HCT116 (cell line): ENCODE measurements at regions of chr16 and their contacts with region 1.

Region 1: DNA sequence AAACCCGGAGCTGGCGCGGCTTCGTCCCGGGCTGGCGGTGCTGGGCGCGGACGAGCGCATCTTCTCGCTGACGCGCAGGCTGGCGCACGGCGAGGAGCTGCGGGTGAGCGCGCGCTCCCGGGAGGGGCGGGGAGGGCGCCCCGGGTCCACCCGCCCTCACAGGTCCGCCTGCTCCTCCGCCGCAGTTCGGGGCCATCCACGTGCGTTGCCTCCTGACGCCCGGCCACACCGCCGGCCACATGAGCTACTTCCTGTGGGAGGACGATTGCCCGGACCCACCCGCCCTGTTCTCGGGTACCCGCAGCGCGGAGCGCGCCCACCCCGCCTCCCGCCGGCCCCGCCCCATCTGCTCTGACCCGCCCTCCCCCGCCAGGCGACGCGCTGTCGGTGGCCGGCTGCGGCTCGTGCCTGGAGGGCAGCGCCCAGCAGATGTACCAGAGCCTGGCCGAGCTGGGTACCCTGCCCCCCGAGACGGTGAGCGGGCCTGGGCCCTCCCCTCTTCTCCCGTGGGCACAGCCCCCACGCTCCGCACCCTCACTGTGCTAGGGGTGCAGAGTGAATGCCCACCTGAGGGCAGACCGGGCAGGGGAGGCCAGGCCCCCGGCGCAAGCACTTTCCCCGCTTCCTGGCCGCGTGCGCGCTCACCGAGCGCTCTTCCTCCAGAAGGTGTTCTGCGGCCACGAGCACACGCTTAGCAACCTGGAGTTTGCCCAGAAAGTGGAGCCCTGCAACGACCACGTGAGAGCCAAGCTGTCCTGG is 1.4 kb downstream of the HAGHL start:
- DNase-seq: peak; percentile 86
- ATAC-seq: peak; percentile 55
- H3K4me3 ChIP-seq: peak overlapping the region; percentile 80 to 89
- H3K27ac ChIP-seq: peak overlapping the region; percentile 96
- H3K4me1 ChIP-seq: peaks cover 5 to 31% of the 10 kb centered on the region in 2 experiments; a peak in 3 of 4 replicates
- H3K27me3 ChIP-seq: no peaks in the 10 kb centered on the region
- CTCF ChIP-seq: no peak
- POLR2A ChIP-seq: peak; percentile 71
- RAD21 ChIP-seq: no peak

Region 2: DNA sequence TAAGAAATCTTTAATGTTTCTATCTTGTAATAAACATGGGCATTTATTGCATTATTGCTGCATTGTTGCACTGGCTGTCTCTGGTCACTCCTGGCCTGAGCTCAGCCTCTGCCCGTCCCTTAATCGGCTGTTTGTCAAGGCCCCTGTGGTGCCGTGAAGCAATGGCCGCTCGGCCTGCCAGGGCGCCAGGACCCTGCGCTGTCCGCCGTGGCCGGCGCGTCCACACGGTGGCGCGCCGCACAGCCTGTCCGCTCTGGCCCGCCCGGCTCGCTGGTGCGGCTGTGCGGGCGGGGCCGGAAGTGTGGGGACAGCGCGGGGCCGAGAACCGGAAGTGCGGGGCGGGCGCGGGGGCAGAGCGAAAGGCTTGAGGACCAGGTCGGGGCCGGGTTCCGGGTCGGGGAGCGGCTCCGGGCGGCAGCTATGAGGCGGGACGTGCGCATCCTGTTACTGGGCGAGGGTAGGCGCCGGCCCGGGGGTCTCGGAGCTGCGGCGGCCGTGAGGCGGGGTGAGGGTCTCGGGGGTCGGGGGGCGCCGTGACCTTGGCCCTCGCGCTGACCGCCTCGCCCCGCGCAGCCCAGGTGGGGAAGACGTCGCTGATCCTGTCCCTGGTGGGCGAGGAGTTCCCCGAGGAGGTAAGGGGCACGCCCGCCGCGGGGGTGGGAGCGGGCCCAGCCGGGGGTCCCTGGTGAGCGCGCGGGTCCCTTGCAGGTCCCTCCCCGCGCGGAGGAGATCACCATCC is 60.4 kb before region 1 on chr16 and contains the start of gene RHOT2:
- CTCF ChIA-PET with region 1: no interaction called
- POLR2A ChIA-PET with region 1: no interaction called
- RAD21 ChIA-PET with region 1: no interaction called
- intact Hi-C with region 1: no loop called
- DNase-seq: no peak
- ATAC-seq: peak; percentile 90
- H3K4me3 ChIP-seq: peak within 1 kb of the TSS; percentile 66 to 72
- H3K27ac ChIP-seq: peak within 1 kb of the TSS; percentile 78
- H3K4me1 ChIP-seq: peaks cover 0 to 10% of the 10 kb centered on the region in 2 experiments; a peak in 1 of 4 replicates
- H3K27me3 ChIP-seq: no peaks in the 10 kb centered on the region
- CTCF ChIP-seq: peak; percentile 37 to 60 (median 49); a peak in 5 of 6 replicates
- POLR2A ChIP-seq: no peak
- RAD21 ChIP-seq: no peak
- total RNA-seq, gene RHOT2: 98.5 TPM

Region 3: GRCh38 chr16:714558-715476 is 13.5 kb before region 1 on chr16 and contains the start of gene METRN:
- CTCF ChIA-PET with region 1: interaction called, 20 read pairs
- POLR2A ChIA-PET with region 1: interaction called, 20 read pairs
- RAD21 ChIA-PET with region 1: interaction called in 1 of 2 experiments, 4 read pairs
- intact Hi-C with region 1: no loop called
- DNase-seq: no peak
- ATAC-seq: peak; percentile 64
- H3K4me3 ChIP-seq: peak within 1 kb of the TSS; percentile 59 to 74
- H3K27ac ChIP-seq: peak within 1 kb of the TSS; percentile 92
- H3K4me1 ChIP-seq: peaks cover 37 to 75% of the 10 kb centered on the region in 2 experiments
- H3K27me3 ChIP-seq: no peaks in the 10 kb centered on the region
- CTCF ChIP-seq: no peak
- POLR2A ChIP-seq: no peak
- RAD21 ChIP-seq: no peak
- total RNA-seq, gene METRN: 193 TPM